ENCODE measurements at regions of chr22 and their contacts with region 1.

Region 1: GRCh38 chr22:37199103-37199759 is 11.2 kb upstream of the C1QTNF6 start:
- DNase-seq: peak; percentile 99
- H3K4me3 Mint-ChIP-seq: peak overlapping the region; percentile 83
- H3K27ac Mint-ChIP-seq: peak overlapping the region; percentile 87
- H3K4me1 Mint-ChIP-seq: peaks cover 38% of the 10 kb centered on the region
- H3K27me3 Mint-ChIP-seq: no peaks in the 10 kb centered on the region

Region 2: GRCh38 chr22:36977947-36978660 is 221.1 kb before region 1 on chr22:
- intact Hi-C with region 1: loop called (anchors 1 kb)
- DNase-seq: peak; percentile 84
- H3K4me3 Mint-ChIP-seq: peak overlapping the region; percentile 86
- H3K27ac Mint-ChIP-seq: peak overlapping the region; percentile 74
- H3K4me1 Mint-ChIP-seq: peaks cover 15% of the 10 kb centered on the region
- H3K27me3 Mint-ChIP-seq: peaks cover 8% of the 10 kb centered on the region

Region 3: GRCh38 chr22:37077884-37078485 is 121.2 kb before region 1 on chr22:
- intact Hi-C with region 1: loop called (anchors 1 kb)
- DNase-seq: peak; percentile 79
- H3K4me3 Mint-ChIP-seq: peak overlapping the region; percentile 49
- H3K27ac Mint-ChIP-seq: peak overlapping the region; percentile 95
- H3K4me1 Mint-ChIP-seq: peaks cover 53% of the 10 kb centered on the region
- H3K27me3 Mint-ChIP-seq: peaks cover 3% of the 10 kb centered on the region

Region 4: GRCh38 chr22:37166675-37167066 is 32.6 kb before region 1 on chr22:
- intact Hi-C with region 1: loop called (anchors 1 kb)
- DNase-seq: peak; percentile 72
- H3K4me3 Mint-ChIP-seq: peak overlapping the region; percentile 75
- H3K27ac Mint-ChIP-seq: peak overlapping the region; percentile 69
- H3K4me1 Mint-ChIP-seq: peaks cover 78% of the 10 kb centered on the region
- H3K27me3 Mint-ChIP-seq: peaks cover 4% of the 10 kb centered on the region

Region 5: GRCh38 chr22:37244114-37244921 is 45.1 kb after region 1 on chr22 and contains the start of gene RAC2:
- intact Hi-C with region 1: loop called (anchors 1 kb)
- DNase-seq: peak; percentile 83
- H3K4me3 Mint-ChIP-seq: peak within 1 kb of the TSS; percentile 99
- H3K27ac Mint-ChIP-seq: peak within 1 kb of the TSS; percentile 99
- H3K4me1 Mint-ChIP-seq: peaks cover 46% of the 10 kb centered on the region
- H3K27me3 Mint-ChIP-seq: no peaks in the 10 kb centered on the region
- total RNA-seq, gene RAC2: 592 and 614 TPM in 2 replicates

Region 6: DNA sequence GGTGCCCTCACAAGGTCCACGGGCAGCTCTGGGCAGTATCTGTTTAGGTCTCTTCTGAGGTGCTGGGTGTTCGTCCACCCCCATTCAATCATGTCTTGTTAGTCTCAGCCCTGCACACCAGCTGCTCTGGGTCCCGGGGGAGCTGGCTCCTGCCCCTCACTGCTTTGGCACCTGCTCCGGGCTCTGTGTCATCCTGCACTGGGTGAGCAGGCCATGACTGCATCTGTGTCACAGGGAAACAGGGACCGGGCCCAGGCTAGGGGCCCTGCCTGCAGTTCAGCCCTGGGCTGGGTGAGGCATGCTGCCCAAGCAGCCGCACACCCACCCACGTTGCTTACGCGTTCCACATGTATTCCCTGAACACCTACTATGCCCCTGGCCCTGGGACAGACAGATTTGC is 184.1 kb after region 1 on chr22:
- intact Hi-C with region 1: no loop called
- DNase-seq: no peak
- H3K4me3 Mint-ChIP-seq: no peak overlapping the region
- H3K27ac Mint-ChIP-seq: no peak overlapping the region
- H3K4me1 Mint-ChIP-seq: no peaks in the 10 kb centered on the region
- H3K27me3 Mint-ChIP-seq: peaks cover 4% of the 10 kb centered on the region